ENCODE measurements at regions of chr15 and their contacts with region 1.

Region 1: GRCh38 chr15:39213385-39213840 is 367.5 kb upstream of the THBS1 start:
- DNase-seq: peak; percentile 69 to 88
- H3K4me3 ChIP-seq: peak overlapping the region in 1 of 4 experiments; percentile 35; a peak in 1 of 8 replicates
- H3K27ac ChIP-seq: peak overlapping the region; percentile 84
- H3K4me1 ChIP-seq: peaks cover 2 to 4% (median 3%) of the 10 kb centered on the region in 4 experiments; a peak in 3 of 7 replicates
- H3K27me3 ChIP-seq: no peaks in the 10 kb centered on the region
- CTCF ChIP-seq: no peak
- EP300 ChIP-seq: peak in 1 of 2 experiments; percentile 89; a peak in 2 of 3 replicates
- POLR2A ChIP-seq: peak in 1 of 2 experiments; percentile 77; a peak in 1 of 3 replicates
- RAD21 ChIP-seq: peak in 1 of 2 experiments; percentile 10; a peak in 1 of 4 replicates

Region 2: GRCh38 chr15:39084683-39085530 is 128.5 kb before region 1 on chr15:
- CTCF ChIA-PET with region 1: no interaction called
- POLR2A ChIA-PET with region 1: no interaction called
- DNase-seq: no peak
- H3K4me3 ChIP-seq: no peak overlapping the region
- H3K27ac ChIP-seq: no peak overlapping the region
- H3K4me1 ChIP-seq: peaks cover 0 to 2% (median 0%) of the 10 kb centered on the region in 4 experiments; a peak in 3 of 7 replicates
- H3K27me3 ChIP-seq: no peaks in the 10 kb centered on the region
- CTCF ChIP-seq: no peak
- EP300 ChIP-seq: no peak
- POLR2A ChIP-seq: no peak
- RAD21 ChIP-seq: no peak

Region 3: DNA sequence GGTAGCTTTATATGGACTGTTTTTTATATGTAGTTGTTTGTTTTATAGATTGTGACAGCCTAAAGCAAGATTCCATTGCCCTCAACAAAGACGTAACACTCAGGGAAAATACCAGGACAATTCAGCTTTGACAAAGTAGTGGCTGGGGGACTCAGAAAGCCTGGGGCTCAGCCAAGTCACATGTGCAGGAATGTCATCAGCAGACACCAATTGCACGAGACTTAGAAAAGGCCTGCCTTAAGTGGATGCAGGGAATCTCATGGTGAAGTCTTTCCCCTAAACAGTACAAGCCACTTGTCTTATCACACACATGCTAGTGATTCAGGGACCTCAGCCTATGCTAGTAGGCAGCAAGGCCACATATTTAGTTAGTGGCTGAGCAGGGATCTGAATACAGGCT is 14.3 kb before region 1 on chr15:
- CTCF ChIA-PET with region 1: no interaction called
- POLR2A ChIA-PET with region 1: interaction called, 10 read pairs
- DNase-seq: no peak
- H3K4me3 ChIP-seq: no peak overlapping the region
- H3K27ac ChIP-seq: no peak overlapping the region
- H3K4me1 ChIP-seq: no peaks in the 10 kb centered on the region
- H3K27me3 ChIP-seq: no peaks in the 10 kb centered on the region; a peak in 3 of 7 replicates
- CTCF ChIP-seq: no peak
- EP300 ChIP-seq: no peak
- POLR2A ChIP-seq: no peak
- RAD21 ChIP-seq: no peak

Measured in H1 (cell line).